Naive thymus-derived CD4-positive, alpha-beta T cell (primary cell): ENCODE measurements at regions of chr9 and their contacts with region 1.

Region 1: DNA sequence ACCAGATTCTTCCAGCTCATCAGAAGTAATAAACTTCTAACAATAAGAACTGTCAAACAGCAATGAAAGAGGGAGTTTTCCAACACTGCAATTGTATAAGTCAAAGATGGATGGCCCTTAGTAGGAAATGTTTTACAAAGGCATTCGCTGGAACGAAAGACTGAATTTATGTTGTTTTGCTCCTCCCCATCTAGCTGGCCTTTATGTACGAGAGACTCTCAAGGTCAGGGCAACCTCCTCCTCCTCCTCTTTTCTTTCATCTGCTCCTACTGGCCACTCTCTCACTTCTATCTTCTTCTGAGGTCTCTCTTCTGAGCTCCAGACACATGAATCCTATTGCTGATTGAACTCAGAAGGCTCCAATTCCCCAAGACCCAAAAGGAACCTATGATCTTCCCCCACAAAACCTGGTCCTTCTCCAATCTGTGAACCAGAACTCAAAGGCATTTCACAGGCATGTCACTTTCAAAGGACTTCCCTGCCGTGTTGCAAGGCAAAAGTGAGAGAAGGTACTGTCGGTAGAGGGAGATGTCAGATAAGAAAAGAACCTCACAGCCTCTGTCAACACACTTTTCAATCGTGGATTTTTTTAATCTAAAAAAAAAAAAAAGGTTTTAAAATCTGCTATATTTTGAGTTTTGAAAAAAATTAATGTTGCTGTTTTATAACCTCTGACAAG is 28.5 kb upstream of the PUM3 start:
- DNase-seq: peak in 7 of 9 donors; percentile 18 to 56 (median 48)
- ATAC-seq: peak; percentile 79
- H3K4me3 ChIP-seq: no peak overlapping the region
- H3K4me3 Mint-ChIP-seq: peak overlapping the region in 6 of 10 donors; percentile 4 to 49 (median 22)
- H3K27ac ChIP-seq: no peak overlapping the region
- H3K27ac Mint-ChIP-seq: peak overlapping the region in 7 of 9 donors; percentile 0 to 74 (median 49)
- H3K4me1 ChIP-seq: peaks cover 0 to 5% of the 10 kb centered on the region in 2 donors
- H3K4me1 Mint-ChIP-seq: peaks cover 0 to 45% (median 23%) of the 10 kb centered on the region in 7 donors
- H3K27me3 ChIP-seq: no peaks in the 10 kb centered on the region
- H3K27me3 Mint-ChIP-seq: peaks cover 0 to 17% (median 6%) of the 10 kb centered on the region in 5 donors

Region 2: GRCh38 chr9:3059781-3060468 is 187.5 kb after region 1 on chr9:
- CTCF ChIA-PET with region 1: no interaction called
- POLR2A ChIA-PET with region 1: no interaction called
- intact Hi-C with region 1: no loop called
- DNase-seq: no peak
- ATAC-seq: no peak
- H3K4me3 ChIP-seq: no peak overlapping the region
- H3K4me3 Mint-ChIP-seq: no peak overlapping the region
- H3K27ac ChIP-seq: no peak overlapping the region
- H3K27ac Mint-ChIP-seq: peak overlapping the region in 1 of 9 donors; percentile 3
- H3K4me1 ChIP-seq: no peaks in the 10 kb centered on the region
- H3K4me1 Mint-ChIP-seq: no peaks in the 10 kb centered on the region
- H3K27me3 ChIP-seq: peaks cover 0 to 2% of the 10 kb centered on the region in 2 donors
- H3K27me3 Mint-ChIP-seq: peaks cover 5 to 22% (median 7%) of the 10 kb centered on the region in 5 donors

Region 3: GRCh38 chr9:3647652-3648051 is 775.3 kb after region 1 on chr9:
- CTCF ChIA-PET with region 1: no interaction called
- POLR2A ChIA-PET with region 1: no interaction called
- intact Hi-C with region 1: loop called in 1 of 2 experiments (anchors 1 kb)
- DNase-seq: peak in 4 of 9 donors; percentile 1 to 18 (median 3)
- ATAC-seq: no peak
- H3K4me3 ChIP-seq: no peak overlapping the region
- H3K4me3 Mint-ChIP-seq: no peak overlapping the region
- H3K27ac ChIP-seq: no peak overlapping the region
- H3K27ac Mint-ChIP-seq: no peak overlapping the region
- H3K4me1 ChIP-seq: no peaks in the 10 kb centered on the region
- H3K4me1 Mint-ChIP-seq: no peaks in the 10 kb centered on the region
- H3K27me3 ChIP-seq: no peaks in the 10 kb centered on the region
- H3K27me3 Mint-ChIP-seq: no peaks in the 10 kb centered on the region

Region 4: GRCh38 chr9:4366591-4367330 is 1494.4 kb after region 1 on chr9:
- CTCF ChIA-PET with region 1: no interaction called
- POLR2A ChIA-PET with region 1: no interaction called
- intact Hi-C with region 1: loop called in 1 of 2 experiments (anchors 5 kb)
- DNase-seq: peak in 5 of 9 donors; percentile 11 to 37 (median 23)
- ATAC-seq: no peak
- H3K4me3 ChIP-seq: no peak overlapping the region
- H3K4me3 Mint-ChIP-seq: no peak overlapping the region
- H3K27ac ChIP-seq: no peak overlapping the region
- H3K27ac Mint-ChIP-seq: no peak overlapping the region
- H3K4me1 ChIP-seq: no peaks in the 10 kb centered on the region
- H3K4me1 Mint-ChIP-seq: peaks cover 0 to 1% (median 0%) of the 10 kb centered on the region in 7 donors
- H3K27me3 ChIP-seq: no peaks in the 10 kb centered on the region
- H3K27me3 Mint-ChIP-seq: peaks cover 0 to 8% (median 0%) of the 10 kb centered on the region in 5 donors